Activated CD4-positive, alpha-beta T cell treated with anti-CD3 and anti-CD28 coated beads for 36 hours (primary cell): ENCODE measurements at regions of chr14 and their contacts with region 1.

Region 1: GRCh38 chr14:23877538-23878180 is 75.9 kb upstream of the DHRS4 start:
- DNase-seq: peak; percentile 43
- ATAC-seq: peak; percentile 85
- H3K4me3 Mint-ChIP-seq: no peak overlapping the region
- H3K27ac Mint-ChIP-seq: peak overlapping the region; percentile 64
- H3K4me1 Mint-ChIP-seq: peaks cover 18% of the 10 kb centered on the region
- H3K27me3 Mint-ChIP-seq: peaks cover 10% of the 10 kb centered on the region

Region 2: DNA sequence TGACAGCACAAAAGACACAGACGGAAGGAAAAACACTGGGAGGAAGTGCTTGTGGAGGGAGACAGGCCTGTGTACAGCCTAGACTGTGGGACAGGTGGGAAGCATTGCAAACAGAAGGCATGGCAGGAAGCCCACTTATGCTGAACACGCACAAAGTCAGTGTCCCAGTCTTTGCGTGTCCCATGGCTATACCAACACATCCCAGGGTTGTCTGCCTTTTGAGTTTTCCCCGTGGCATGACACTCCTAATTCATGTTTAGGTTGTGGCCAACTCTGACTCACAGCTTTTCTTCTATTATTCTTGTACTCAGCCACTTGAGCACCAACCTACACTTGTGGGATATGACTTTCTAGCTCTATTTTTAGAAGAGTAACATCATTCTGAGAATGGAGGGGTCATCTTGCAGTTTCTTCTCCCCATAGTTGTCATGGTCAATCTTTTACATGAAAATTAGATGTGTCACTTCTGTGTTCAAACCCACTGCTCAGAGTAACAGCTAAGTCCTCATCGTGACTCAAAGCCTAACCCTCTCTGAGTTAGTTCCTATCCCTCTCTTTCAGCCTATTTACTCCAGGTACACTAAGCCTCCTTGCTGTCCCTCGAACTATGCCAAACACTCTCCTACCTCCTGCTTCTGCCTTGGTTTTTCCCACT is 271.6 kb before region 1 on chr14:
- CTCF ChIA-PET with region 1: no interaction called
- POLR2A ChIA-PET with region 1: no interaction called
- intact Hi-C with region 1: loop called in 1 of 2 experiments (anchors 1 kb)
- DNase-seq: peak; percentile 44
- ATAC-seq: peak; percentile 90
- H3K4me3 Mint-ChIP-seq: peak overlapping the region; percentile 2
- H3K27ac Mint-ChIP-seq: peak overlapping the region; percentile 84
- H3K4me1 Mint-ChIP-seq: peaks cover 48% of the 10 kb centered on the region
- H3K27me3 Mint-ChIP-seq: no peaks in the 10 kb centered on the region

Region 3: DNA sequence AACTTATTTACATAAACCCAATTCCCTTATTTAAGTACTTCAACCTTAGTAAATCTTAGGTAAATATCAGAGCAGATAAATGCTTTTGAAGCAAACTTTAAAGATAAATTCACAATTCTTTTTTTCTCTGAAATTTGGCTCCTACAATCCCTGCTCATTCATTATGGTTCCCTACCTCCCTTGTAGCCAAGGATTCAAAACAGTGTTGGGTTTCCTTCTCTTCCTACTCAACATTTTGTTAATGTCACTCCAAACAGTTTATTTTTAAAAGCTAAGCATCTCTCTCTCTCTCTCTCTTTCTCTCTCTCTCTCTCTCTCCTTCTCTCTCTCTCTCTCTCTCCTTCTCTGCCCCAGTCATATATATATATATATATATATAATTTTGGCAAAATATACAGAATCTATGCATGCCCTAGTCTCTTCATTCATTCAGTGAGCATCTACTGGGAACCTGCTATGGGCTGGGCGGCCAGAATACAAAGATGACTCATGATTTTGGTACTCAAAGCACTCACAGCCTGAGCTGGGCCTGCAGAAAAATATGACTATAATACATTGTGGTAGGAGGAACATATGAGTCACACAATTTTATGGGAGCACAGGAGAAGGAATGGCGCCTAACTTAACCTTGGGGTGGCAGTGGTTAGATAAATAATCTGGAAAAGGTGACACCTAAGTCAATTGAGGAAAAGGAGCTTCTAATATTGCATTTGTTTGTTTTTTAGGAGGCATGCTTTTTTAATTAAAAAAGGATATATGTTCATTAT is 47.7 kb before region 1 on chr14:
- CTCF ChIA-PET with region 1: no interaction called
- POLR2A ChIA-PET with region 1: no interaction called
- intact Hi-C with region 1: no loop called
- DNase-seq: peak; percentile 10
- ATAC-seq: no peak
- H3K4me3 Mint-ChIP-seq: no peak overlapping the region
- H3K27ac Mint-ChIP-seq: no peak overlapping the region
- H3K4me1 Mint-ChIP-seq: peaks cover 2% of the 10 kb centered on the region
- H3K27me3 Mint-ChIP-seq: no peaks in the 10 kb centered on the region